ENCODE measurements at regions of chr7 and their contacts with region 1.

Region 1: GRCh38 chr7:51162724-51163329 is 153.8 kb downstream of the COBL start:
- DNase-seq: no peak
- ATAC-seq: peak; percentile 88

Region 2: DNA sequence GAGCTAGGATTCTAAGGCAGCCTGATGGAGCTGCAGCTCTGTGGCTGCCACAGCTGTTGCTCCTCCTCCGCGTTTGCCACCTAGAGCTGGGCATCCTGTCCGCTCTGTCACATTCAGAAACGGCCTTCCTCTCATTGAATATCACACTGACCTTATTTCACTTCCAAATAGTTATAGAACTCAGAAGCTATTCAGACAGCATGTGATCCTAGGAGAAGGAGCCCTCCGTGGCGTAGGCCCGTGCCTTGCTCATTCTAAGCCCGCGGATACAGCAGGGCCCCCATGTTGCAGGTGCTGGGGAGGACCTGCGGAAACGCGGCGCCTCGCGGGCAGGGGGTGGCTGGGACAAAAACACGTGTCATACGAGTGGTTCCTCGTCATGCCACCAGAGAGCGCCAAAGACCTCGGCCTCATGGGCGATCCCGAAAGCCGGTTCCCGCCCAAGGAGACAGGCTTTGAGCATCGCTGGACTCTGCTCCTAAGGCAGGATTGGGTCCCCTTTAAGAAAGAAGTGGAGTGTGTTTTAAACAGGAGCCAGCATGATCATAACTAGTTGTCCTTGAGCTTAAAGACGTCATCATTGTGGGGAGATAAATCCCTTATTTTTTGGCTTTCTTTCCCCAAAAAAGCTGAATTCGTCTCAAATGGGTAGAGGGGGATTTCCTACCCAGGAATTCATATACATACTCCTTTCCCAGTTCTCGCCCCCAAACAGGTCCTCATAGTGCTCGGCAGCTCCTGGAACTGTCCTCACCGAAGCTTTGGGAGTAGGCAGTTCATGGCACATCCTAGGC is 694.8 kb before region 1 on chr7:
- intact Hi-C with region 1: loop called (anchors 5 kb)
- DNase-seq: peak; percentile 88
- ATAC-seq: peak; percentile 96

Region 3: DNA sequence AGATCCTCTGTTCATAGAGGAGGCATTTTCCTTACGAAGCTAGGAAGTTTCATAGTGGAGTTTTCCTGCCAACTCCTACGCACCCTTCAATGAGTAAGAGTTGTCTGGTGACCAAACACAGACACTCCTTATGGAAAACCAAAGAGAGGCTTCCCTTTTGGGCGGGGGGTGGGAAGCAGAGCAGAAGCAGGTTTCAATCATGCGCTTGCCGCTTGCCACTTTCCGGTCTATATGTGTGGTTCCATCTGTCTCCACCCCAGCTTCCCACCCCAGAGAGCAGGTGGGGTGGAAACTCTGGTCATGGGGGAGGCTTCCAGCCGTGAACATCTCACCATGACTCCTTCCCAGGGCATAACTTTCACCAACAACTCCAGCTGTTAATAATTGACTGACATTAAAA is 311.4 kb before region 1 on chr7:
- intact Hi-C with region 1: no loop called
- DNase-seq: no peak
- ATAC-seq: peak; percentile 68

Region 4: GRCh38 chr7:51224811-51225612 is 62.2 kb after region 1 on chr7:
- intact Hi-C with region 1: no loop called
- DNase-seq: no peak
- ATAC-seq: peak; percentile 60

Region 5: DNA sequence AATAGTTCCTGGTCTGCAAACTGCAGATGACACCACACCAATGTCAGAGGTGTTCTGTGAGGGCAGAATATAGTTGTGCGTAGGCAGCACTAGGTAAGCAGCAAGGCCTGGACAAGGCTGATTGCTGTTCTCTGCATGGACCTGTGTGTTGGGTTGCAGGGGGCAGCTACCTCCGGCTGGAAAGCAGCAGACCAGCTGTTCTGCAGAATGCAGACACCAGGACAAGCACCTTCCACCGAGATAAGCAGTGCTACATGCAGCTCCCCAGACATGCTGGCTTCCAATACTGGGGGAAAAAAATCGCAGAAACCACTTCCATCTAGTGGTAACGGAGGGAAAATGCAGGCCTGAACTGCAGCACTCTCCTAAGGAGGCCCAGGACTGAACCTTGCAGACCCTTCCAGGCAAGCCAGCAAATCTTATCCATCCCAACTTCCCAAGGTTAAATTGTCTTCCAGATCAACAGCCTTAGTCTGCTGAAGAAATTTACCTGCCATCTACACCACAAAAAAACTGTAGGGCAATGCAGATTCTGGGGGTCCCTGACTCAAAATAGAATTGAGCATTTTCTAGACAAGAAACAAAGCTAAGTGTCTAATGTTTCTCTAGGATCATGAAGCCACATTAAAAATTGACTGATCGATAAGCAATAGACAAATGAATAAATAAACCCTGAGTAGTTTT is 204.2 kb after region 1 on chr7:
- intact Hi-C with region 1: loop called (anchors 5 kb)
- DNase-seq: no peak
- ATAC-seq: peak; percentile 93